Left ventricle myocardium inferior (tissue), 1 donor: ENCODE measurements at regions of chr1 and their contacts with region 1.

Region 1: DNA sequence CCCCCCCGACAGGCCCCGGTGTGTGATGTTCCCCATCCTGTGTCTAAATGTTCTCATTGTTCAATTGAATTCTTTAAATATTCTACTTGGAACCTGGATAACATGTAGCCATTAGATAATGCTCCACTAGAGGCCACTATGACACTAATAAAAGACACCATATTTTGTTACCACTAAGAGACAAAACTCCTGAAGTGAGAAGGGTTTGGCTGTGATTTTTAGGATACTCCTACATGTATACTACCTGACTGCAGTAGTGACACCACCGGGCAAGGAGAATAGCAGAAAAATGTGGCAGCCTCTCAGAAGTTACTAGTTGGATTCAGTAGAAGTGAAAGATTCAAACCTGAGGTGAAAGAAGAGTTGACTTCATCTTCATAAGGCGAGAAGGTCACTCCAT is 36.0 kb downstream of the F5 start:
- DNase-seq: no peak
- H3K4me3 ChIP-seq: no peak overlapping the region
- H3K27ac ChIP-seq: no peak overlapping the region
- H3K4me1 ChIP-seq: no peaks in the 10 kb centered on the region
- H3K27me3 ChIP-seq: no peaks in the 10 kb centered on the region
- CTCF ChIP-seq: peak; percentile 56

Region 2: GRCh38 chr1:169711469-169712281 is 161.4 kb after region 1 on chr1 and contains the start of gene SELL:
- intact Hi-C with region 1: loop called (anchors 10 kb)
- DNase-seq: peak; percentile 18
- H3K4me3 ChIP-seq: peak within 1 kb of the TSS; percentile 45
- H3K27ac ChIP-seq: peak within 1 kb of the TSS; percentile 31
- H3K4me1 ChIP-seq: no peaks in the 10 kb centered on the region
- H3K27me3 ChIP-seq: peaks cover 11% of the 10 kb centered on the region
- CTCF ChIP-seq: peak; percentile 86
- total RNA-seq, gene SELL: 1.2 TPM

Region 3: GRCh38 chr1:169809370-169810095 is 259.2 kb after region 1 on chr1:
- intact Hi-C with region 1: loop called (anchors 10 kb)
- DNase-seq: no peak
- H3K4me3 ChIP-seq: no peak overlapping the region
- H3K27ac ChIP-seq: no peak overlapping the region
- H3K4me1 ChIP-seq: no peaks in the 10 kb centered on the region
- H3K27me3 ChIP-seq: no peaks in the 10 kb centered on the region
- CTCF ChIP-seq: peak; percentile 67